ENCODE measurements at regions of chr5 and their contacts with region 1.

Region 1: GRCh38 chr5:56350598-56351170 is 117.6 kb upstream of the ANKRD55 start:
- DNase-seq: peak; percentile 94
- H3K4me3 ChIP-seq: no peak overlapping the region
- H3K27ac ChIP-seq: peak overlapping the region; percentile 44
- H3K4me1 ChIP-seq: peaks cover 40% of the 10 kb centered on the region
- H3K27me3 ChIP-seq: no peaks in the 10 kb centered on the region
- CTCF ChIP-seq: no peak

Region 2: DNA sequence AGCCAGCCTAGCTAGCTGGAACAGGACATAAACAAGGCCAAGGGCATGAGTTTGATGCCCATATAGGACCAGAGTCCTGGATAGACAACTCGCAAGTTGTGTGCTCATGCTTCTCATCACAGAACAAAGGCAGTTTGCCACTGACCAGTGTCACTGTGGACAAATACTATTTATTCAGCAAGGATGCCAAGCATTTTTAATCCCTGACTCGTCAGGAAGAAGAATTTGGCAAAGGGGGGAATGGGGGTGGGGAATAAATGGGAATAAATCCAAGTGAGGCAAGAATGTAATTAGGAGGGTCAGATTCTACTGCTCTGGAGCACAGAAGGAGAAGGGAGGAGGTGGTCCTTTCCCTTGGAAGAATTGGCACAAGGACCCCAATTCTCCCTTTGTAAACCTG is 70.7 kb before region 1 on chr5:
- CTCF ChIA-PET with region 1: no interaction called
- dilution Hi-C with region 1: loop called (anchors 5 kb)
- in situ Hi-C with region 1: no loop called
- intact Hi-C with region 1: no loop called
- DNase-seq: no peak
- H3K4me3 ChIP-seq: no peak overlapping the region
- H3K27ac ChIP-seq: no peak overlapping the region
- H3K4me1 ChIP-seq: peaks cover 22% of the 10 kb centered on the region
- H3K27me3 ChIP-seq: no peaks in the 10 kb centered on the region
- CTCF ChIP-seq: no peak

Region 3: GRCh38 chr5:56290378-56291078 is 60.2 kb before region 1 on chr5:
- CTCF ChIA-PET with region 1: no interaction called
- dilution Hi-C with region 1: no loop called
- in situ Hi-C with region 1: no loop called
- intact Hi-C with region 1: loop called (anchors 10 kb)
- DNase-seq: no peak
- H3K4me3 ChIP-seq: no peak overlapping the region
- H3K27ac ChIP-seq: no peak overlapping the region
- H3K4me1 ChIP-seq: no peaks in the 10 kb centered on the region
- H3K27me3 ChIP-seq: no peaks in the 10 kb centered on the region
- CTCF ChIP-seq: no peak

Region 4: DNA sequence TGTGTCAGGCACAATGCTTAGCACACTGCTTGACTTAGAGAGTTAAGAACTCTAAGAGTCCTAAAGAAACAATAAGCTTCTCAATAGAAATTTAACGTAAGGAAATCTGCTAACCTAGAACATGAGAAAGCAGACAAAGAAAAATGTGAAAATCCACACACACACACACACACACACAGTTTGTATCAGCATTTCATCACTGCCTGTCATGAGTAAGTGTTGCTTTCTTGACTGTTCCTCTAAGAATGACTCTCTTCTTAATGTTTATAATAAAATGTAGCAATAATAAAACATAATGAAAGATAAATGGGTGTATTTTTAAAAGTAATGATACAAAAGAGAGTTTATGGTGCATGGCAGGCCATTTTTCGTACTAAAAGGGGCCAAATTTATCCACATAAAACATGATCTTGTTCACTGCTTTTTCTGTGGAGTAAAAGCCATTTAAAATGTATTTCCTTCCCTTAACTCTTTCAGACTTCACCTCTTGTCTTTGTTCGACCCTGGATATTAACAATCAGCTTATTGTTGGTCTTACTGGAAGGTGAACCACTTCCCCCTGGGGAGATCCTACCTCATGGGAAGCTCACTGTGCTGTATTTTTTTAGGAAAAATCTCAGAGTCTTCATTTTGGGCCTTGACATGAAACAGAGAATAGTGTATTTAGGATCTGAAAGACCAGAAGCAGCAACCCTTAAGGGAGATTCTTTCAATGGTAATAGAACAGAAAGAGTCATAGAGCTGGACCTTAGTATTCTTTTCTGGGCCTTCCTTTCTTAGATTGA is 10.3 kb before region 1 on chr5:
- CTCF ChIA-PET with region 1: no interaction called
- dilution Hi-C with region 1: no loop called
- in situ Hi-C with region 1: no loop called
- intact Hi-C with region 1: no loop called
- DNase-seq: peak; percentile 30
- H3K4me3 ChIP-seq: no peak overlapping the region
- H3K27ac ChIP-seq: no peak overlapping the region
- H3K4me1 ChIP-seq: no peaks in the 10 kb centered on the region
- H3K27me3 ChIP-seq: no peaks in the 10 kb centered on the region
- CTCF ChIP-seq: no peak

Region 5: DNA sequence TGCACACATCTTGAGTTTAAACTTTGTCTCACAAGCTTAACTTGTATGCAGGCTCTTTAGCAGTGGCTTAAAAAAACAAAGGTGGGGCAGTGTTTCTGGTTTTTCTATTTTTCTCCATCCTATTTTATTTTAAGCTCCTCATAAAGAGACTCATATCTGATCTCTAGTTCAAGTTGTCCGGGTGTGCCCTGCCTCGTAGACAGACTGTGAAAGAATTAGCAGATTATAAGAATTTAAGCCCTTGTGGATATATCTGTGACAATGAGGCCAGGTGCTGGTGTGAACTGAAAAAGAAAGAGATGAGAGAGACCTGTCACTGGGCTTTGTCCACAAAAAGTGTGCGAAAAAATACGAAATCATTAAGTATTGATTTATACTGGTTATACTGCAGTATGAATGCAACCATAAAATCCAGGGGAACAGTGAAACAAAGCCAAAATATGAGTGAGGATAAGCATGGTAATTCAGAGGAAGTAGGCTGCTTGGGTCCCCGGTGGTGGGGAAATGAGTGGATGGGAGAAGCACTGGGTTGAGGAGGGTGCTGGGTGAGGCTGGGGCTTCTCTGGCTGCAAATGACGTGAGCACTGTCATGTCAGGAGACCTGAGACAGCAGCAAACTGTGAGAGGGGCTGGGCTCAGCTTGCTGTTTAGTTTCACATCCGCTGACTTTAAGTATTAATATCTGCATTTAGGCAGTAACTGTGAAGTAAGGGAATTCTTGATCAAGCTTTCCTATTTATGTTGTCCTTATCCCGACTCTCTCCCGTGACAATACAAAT is 62.1 kb after region 1 on chr5:
- CTCF ChIA-PET with region 1: no interaction called
- dilution Hi-C with region 1: loop called (anchors 5 kb)
- in situ Hi-C with region 1: no loop called
- intact Hi-C with region 1: no loop called
- DNase-seq: no peak
- H3K4me3 ChIP-seq: no peak overlapping the region
- H3K27ac ChIP-seq: no peak overlapping the region
- H3K4me1 ChIP-seq: peaks cover 9% of the 10 kb centered on the region
- H3K27me3 ChIP-seq: no peaks in the 10 kb centered on the region
- CTCF ChIP-seq: no peak

Region 6: GRCh38 chr5:56426693-56427092 is 76.0 kb after region 1 on chr5:
- CTCF ChIA-PET with region 1: no interaction called
- dilution Hi-C with region 1: no loop called
- in situ Hi-C with region 1: no loop called
- intact Hi-C with region 1: no loop called
- DNase-seq: no peak
- H3K4me3 ChIP-seq: no peak overlapping the region
- H3K27ac ChIP-seq: no peak overlapping the region
- H3K4me1 ChIP-seq: peaks cover 10% of the 10 kb centered on the region
- H3K27me3 ChIP-seq: no peaks in the 10 kb centered on the region
- CTCF ChIP-seq: no peak